Heart left ventricle (tissue), 16 donors: ENCODE measurements at regions of chr11 and their contacts with region 1.

Region 1: DNA sequence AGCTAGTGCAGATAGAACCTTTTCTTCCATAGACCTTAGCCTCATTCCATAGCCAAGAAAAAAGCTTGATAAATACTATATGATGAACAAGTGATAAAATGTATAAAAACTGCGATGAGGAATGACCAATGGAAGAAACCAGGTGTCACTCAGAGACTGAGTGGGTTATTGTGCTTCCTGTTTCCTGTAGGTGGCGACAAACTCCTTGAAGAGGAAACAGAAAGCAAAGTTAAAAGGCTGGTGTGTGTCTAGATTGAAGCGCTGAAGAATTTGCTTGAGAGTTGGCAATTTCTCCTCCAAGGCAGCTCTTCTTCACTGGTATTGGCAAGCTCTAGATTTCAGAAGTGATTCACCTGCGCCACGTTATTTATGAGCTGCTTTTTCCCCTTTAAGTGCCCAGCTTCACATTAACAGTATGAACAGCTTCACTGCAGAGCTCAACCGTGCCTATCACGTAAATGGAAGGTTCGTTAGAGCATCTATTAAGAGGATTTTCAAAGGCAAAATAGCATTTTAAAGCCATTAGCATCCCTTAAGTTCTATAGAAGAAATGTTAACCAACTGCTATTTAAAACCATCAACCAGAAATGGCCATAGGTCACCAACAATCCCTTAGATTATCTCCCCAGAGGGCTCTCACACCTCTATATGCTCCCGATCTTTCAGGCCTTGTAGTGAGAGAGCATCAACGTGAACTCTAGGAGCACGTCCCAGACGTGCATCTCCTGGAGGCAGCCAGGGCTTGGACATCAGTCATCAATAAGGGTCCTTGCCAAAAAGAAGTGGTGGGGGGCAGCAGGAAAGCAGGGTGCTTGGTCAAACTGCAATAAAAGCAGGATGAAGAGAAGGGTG is 179.4 kb downstream of the CADM1 start:
- DNase-seq: peak in 1 of 5 donors; percentile 20
- ATAC-seq: peak; percentile 61 to 90 (median 78)
- H3K4me3 ChIP-seq: peak overlapping the region in 3 of 12 donors; percentile 8 to 37 (median 14)
- H3K27ac ChIP-seq: no peak overlapping the region
- H3K4me1 ChIP-seq: peaks cover 0 to 8% (median 0%) of the 10 kb centered on the region in 12 donors
- H3K27me3 ChIP-seq: no peaks in the 10 kb centered on the region
- CTCF ChIP-seq: peak; percentile 67 to 85 (median 78)
- POLR2A ChIP-seq: no peak

Region 2: GRCh38 chr11:115672999-115673411 is 348.2 kb after region 1 on chr11:
- intact Hi-C with region 1: loop called in 6 of 10 experiments (anchors 5 to 10 kb)
- DNase-seq: peak in 4 of 5 donors; percentile 27 to 58 (median 48)
- ATAC-seq: peak; percentile 54 to 94 (median 81)
- H3K4me3 ChIP-seq: no peak overlapping the region
- H3K27ac ChIP-seq: peak overlapping the region in 2 of 12 donors; percentile 23 to 41
- H3K4me1 ChIP-seq: peaks cover 0 to 15% (median 8%) of the 10 kb centered on the region in 12 donors
- H3K27me3 ChIP-seq: no peaks in the 10 kb centered on the region
- CTCF ChIP-seq: no peak
- POLR2A ChIP-seq: no peak